ENCODE measurements at regions of chr6 and their contacts with region 1.

Region 1: DNA sequence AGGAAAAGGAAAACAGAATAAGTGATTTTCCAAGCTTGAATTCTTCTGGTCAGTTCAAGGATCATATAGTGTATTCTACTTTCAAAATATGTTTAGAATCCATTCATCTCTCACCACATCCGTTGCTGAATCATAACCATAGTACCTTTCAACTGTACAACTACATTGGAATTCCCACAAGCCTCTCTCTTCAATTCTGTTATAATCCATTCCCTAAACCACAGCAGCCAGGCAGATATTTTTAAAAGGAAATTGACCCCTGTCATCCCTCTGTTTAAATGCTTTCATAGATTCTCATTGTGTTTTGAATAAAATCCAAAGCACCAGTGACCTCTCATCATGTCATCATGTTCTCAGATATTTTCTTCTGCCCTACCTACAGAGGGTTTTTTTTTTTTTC is 412.7 kb downstream of the GRIK2 start:
- DNase-seq: no peak
- H3K4me3 Mint-ChIP-seq: no peak overlapping the region
- H3K27ac Mint-ChIP-seq: no peak overlapping the region
- H3K4me1 Mint-ChIP-seq: peaks cover 13% of the 10 kb centered on the region
- H3K27me3 Mint-ChIP-seq: no peaks in the 10 kb centered on the region
- CTCF ChIP-seq: no peak

Region 2: DNA sequence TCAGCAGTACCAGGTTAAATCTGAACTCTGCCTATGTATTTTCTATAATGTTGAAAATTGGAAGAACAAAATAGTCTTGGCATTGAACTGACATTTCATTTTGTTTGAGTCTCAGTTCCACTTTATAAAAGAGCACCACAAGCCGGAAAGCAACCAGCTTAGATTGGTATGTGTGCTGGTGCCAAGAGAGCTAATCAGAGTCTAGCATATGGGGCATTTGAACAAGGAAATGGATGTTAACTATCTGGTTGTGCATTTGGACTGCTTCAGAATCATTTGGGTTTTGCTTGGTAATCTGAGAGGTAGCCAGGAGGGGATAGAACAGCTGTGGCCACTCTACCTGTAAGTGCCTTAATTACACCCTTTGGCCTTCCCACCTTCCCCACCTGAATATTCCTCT is 227.9 kb before region 1 on chr6:
- CTCF ChIA-PET with region 1: no interaction called
- intact Hi-C with region 1: loop called (anchors 10 kb)
- DNase-seq: no peak
- H3K4me3 Mint-ChIP-seq: no peak overlapping the region
- H3K27ac Mint-ChIP-seq: no peak overlapping the region
- H3K4me1 Mint-ChIP-seq: no peaks in the 10 kb centered on the region
- H3K27me3 Mint-ChIP-seq: no peaks in the 10 kb centered on the region
- CTCF ChIP-seq: no peak

Measured in Calu3 (cell line).